Left ventricle myocardium inferior (tissue), 1 donor: ENCODE measurements at regions of chr17 and their contacts with region 1.

Region 1: DNA sequence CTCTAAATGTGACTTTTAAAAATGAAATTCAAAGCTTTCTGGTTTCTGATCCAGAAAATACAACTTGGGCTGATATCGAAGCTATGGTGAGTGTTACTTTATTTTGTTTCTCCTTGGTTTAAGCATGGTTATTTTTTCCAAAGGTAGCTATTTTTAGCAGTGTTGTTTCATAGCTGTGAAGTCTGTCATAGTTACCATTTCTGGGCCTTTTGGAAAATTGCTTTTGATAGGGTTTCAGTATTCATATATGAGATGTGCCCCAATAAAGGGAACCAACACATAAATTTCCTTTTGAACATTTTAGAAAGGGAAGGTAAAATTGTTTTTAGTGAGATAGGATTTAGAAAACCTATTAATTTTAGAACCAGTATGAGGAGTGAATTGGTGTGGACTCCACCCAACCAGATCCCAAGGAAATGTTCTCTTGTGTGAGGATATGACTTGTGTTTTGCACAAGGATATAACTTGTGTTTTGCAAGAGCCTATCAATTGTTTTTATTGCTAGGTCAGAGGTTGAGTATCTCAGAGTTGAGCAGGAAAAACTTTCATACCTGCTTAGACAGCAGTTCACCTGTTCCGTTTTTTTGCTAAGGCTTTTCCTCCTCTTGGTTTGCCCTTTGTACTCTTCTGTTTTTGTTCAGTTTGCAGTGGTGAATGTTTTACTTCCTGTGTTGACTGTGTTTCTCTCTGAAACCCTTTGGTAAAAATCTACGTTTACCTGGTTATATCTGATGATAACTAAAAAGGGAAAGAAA is 5.0 kb downstream of the NBR1 start:
- DNase-seq: no peak
- H3K4me3 ChIP-seq: peak overlapping the region; percentile 9
- H3K27ac ChIP-seq: peak overlapping the region; percentile 33
- H3K4me1 ChIP-seq: peaks cover 78% of the 10 kb centered on the region
- H3K27me3 ChIP-seq: no peaks in the 10 kb centered on the region
- CTCF ChIP-seq: no peak

Region 2: DNA sequence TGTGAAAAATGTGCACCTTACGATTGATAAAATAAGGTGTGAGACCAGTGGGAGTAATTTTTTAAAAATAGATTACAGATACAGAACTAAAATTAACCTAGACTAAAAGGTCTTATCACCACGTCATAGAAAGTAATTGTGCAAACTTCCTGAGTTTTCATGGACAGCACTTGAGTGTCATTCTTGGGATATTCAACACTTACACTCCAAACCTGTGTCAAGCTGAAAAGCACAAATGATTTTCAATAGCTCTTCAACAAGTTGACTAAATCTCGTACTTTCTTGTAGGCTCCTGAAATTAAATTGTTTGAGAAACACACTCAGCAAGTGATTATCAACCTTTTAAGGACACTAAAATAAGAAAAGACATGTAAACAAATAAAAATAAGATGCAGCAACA is 71.3 kb before region 1 on chr17:
- intact Hi-C with region 1: no loop called
- DNase-seq: no peak
- H3K4me3 ChIP-seq: no peak overlapping the region
- H3K27ac ChIP-seq: no peak overlapping the region
- H3K4me1 ChIP-seq: no peaks in the 10 kb centered on the region
- H3K27me3 ChIP-seq: no peaks in the 10 kb centered on the region
- CTCF ChIP-seq: no peak

Region 3: DNA sequence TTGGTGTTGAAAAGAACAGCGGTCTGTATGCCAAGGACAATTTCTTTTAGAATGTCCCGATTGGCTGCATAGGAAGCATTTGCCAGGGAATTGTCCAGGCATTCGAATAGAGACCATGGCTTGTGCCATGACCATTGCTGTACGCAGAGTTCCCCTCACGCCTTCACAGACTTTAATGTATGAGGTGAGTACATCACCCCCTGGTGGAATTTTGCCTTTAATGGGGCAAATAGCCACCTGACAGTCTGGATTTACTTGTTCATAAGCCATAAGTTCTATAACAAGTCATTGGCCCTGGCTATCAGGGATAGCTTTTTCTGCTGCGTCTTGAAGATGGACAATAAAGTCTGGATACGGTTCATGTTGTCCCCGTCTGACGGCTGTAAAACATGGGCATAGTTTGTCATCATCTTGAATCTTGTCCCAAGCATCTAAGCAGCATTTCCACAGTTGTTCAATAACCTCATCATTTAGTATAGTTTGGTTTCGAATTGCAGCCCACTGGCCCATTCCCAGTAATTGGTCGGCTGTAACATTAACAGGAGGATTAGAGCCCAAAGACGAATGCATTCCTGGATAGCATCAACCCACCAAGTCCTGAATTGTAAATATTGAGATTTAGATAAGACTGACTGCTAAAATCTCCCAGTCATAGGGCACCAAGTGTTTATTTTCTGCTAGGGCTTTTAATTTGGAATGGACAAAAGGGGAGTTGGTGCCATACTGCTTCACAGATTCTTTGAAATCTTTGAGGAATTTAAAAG is 155.1 kb after region 1 on chr17:
- intact Hi-C with region 1: loop called (anchors 5 kb)
- DNase-seq: no peak
- H3K4me3 ChIP-seq: no peak overlapping the region
- H3K27ac ChIP-seq: no peak overlapping the region
- H3K4me1 ChIP-seq: peaks cover 12% of the 10 kb centered on the region
- H3K27me3 ChIP-seq: no peaks in the 10 kb centered on the region
- CTCF ChIP-seq: no peak